ENCODE measurements at regions of chr5 and their contacts with region 1.

Region 1: GRCh38 chr5:120327180-120327579 is 136.9 kb upstream of the PRR16 start:
- DNase-seq: no peak
- H3K4me3 ChIP-seq: no peak overlapping the region
- H3K27ac ChIP-seq: no peak overlapping the region
- H3K4me1 ChIP-seq: no peaks in the 10 kb centered on the region
- H3K27me3 ChIP-seq: no peaks in the 10 kb centered on the region
- CTCF ChIP-seq: peak; percentile 11 to 29

Region 2: DNA sequence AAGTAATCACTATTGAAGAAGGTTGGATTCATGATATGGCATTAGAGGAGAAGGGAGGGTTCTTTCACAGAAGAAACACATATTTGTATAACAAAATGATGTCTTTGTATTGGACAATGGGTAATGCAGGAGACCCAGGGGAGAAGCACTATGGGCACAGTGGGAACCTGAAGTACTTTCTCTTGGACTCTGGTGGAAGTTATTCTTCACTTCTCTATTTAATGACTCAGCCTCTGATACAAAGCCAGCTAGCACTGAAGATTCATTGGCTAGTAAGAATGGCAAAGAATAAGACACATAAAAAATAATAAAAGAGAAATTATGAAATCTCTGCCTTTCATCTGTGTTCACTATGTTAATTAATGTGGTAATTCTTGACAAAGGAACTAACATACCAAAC is 13.0 kb before region 1 on chr5:
- CTCF ChIA-PET with region 1: no interaction called
- dilution Hi-C with region 1: no loop called
- in situ Hi-C with region 1: no loop called
- intact Hi-C with region 1: no loop called
- DNase-seq: peak; percentile 10
- H3K4me3 ChIP-seq: no peak overlapping the region
- H3K27ac ChIP-seq: no peak overlapping the region
- H3K4me1 ChIP-seq: no peaks in the 10 kb centered on the region
- H3K27me3 ChIP-seq: no peaks in the 10 kb centered on the region
- CTCF ChIP-seq: no peak

Region 3: GRCh38 chr5:120394259-120394658 is 67.1 kb after region 1 on chr5:
- CTCF ChIA-PET with region 1: no interaction called
- dilution Hi-C with region 1: loop called (anchors 5 kb)
- in situ Hi-C with region 1: no loop called
- intact Hi-C with region 1: no loop called
- DNase-seq: no peak
- H3K4me3 ChIP-seq: no peak overlapping the region
- H3K27ac ChIP-seq: no peak overlapping the region
- H3K4me1 ChIP-seq: peaks cover 5% of the 10 kb centered on the region
- H3K27me3 ChIP-seq: no peaks in the 10 kb centered on the region
- CTCF ChIP-seq: peak; percentile 14 to 40

Measured in mammary epithelial cell (primary cell).